A549 (cell line): ENCODE measurements at regions of chr3 and their contacts with region 1.

Region 1: GRCh38 chr3:58640700-58641372 is 25.7 kb downstream of the FAM3D start:
- DNase-seq: peak; percentile 53 to 61
- ATAC-seq: peak; percentile 93 to 98
- H3K4me3 ChIP-seq: no peak overlapping the region
- H3K27ac ChIP-seq: no peak overlapping the region
- H3K4me1 ChIP-seq: no peaks in the 10 kb centered on the region
- CTCF ChIP-seq: peak; percentile 72
- EP300 ChIP-seq: no peak
- POLR2A ChIP-seq: no peak
- RAD21 ChIP-seq: peak; percentile 87 to 92

Region 2: GRCh38 chr3:58474348-58474911 is 166.4 kb before region 1 on chr3:
- CTCF ChIA-PET with region 1: no interaction called
- POLR2A ChIA-PET with region 1: no interaction called
- DNase-seq: no peak
- ATAC-seq: no peak
- H3K4me3 ChIP-seq: no peak overlapping the region
- H3K27ac ChIP-seq: peak overlapping the region in 1 of 2 experiments; percentile 94; a peak in 4 of 6 replicates
- H3K4me1 ChIP-seq: peaks cover 51% of the 10 kb centered on the region
- CTCF ChIP-seq: no peak
- EP300 ChIP-seq: no peak
- POLR2A ChIP-seq: no peak
- RAD21 ChIP-seq: no peak

Region 3: GRCh38 chr3:58568572-58569286 is 72.1 kb before region 1 on chr3:
- CTCF ChIA-PET with region 1: interaction called, 10 read pairs
- POLR2A ChIA-PET with region 1: no interaction called
- DNase-seq: peak; percentile 33 to 56
- ATAC-seq: peak; percentile 40 to 80; a peak in 4 of 6 replicates
- H3K4me3 ChIP-seq: no peak overlapping the region
- H3K27ac ChIP-seq: 0 out of 6 replicates have a peak overlapping the region, but pooled peaks of 1 of the 2 experiments have one; percentile 18
- H3K4me1 ChIP-seq: peaks cover 16% of the 10 kb centered on the region
- CTCF ChIP-seq: peak; percentile 78
- EP300 ChIP-seq: no peak
- POLR2A ChIP-seq: no peak
- RAD21 ChIP-seq: peak; percentile 60 to 68

Region 4: DNA sequence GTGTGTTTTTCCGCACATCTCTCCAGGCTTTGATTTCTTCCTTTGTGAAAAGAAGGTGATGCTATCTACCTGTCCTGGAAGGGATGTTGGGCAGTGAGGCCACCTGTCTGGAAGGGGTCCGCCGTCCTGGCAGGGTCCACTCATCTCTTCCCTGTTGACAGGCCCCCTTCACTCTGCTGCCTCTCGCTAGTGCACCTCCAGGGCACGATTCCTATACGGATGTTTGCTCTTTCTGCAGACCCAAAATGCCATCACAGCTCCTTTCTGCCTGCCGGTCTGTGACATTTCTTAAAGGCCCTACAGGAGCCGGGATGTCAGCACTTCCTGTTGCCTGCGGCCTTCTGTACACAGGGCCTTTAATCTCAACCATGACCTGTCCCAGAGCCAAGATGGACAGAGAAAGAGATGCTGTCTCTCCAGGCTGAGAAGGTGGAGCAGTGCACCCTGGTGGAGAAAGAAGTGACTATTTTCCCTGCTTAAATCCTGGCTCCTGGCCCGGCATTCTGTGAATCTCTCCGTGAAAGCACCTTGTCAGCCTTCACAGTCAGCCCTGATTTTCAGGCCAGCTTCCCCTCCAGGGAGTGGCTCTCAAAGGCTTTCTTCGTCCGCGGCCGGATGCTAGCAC is 18.3 kb after region 1 on chr3:
- CTCF ChIA-PET with region 1: interaction called, 11 read pairs
- POLR2A ChIA-PET with region 1: no interaction called
- DNase-seq: peak; percentile 28 to 39
- ATAC-seq: peak; percentile 74 to 89; a peak in 5 of 6 replicates
- H3K4me3 ChIP-seq: no peak overlapping the region
- H3K27ac ChIP-seq: no peak overlapping the region
- H3K4me1 ChIP-seq: no peaks in the 10 kb centered on the region
- CTCF ChIP-seq: peak; percentile 33
- EP300 ChIP-seq: no peak
- POLR2A ChIP-seq: no peak
- RAD21 ChIP-seq: peak; percentile 16 to 34; a peak in 1 of 5 replicates

Region 5: DNA sequence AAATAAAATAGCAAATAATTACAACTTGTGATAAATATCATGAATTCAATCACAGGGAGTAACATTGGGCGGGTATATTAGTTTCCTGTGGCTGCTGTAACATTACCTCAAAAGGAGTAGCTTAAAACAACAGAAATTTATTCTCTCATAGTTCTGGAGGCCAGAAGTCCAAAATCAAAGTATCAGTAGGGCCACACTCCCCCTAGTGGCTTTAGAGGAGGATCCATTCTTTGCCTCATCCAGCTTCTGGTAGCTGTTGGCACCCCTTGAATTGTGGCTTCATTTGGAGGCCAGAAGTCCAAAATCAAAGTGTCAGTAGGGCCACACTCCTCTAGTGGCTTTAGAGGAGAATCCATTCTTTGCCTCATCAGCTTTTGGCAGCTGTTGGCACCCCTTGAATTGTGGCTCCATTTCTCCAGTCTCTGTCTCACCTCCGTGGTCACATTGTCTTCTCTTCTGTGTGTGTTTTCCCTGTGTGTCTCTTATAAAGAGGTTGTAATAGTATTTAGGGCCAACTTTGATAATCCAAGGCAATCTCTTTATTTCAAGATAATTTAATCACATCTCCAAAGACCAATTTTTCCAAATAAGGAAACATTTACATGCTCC is 412.1 kb after region 1 on chr3:
- CTCF ChIA-PET with region 1: interaction called, 10 read pairs
- POLR2A ChIA-PET with region 1: no interaction called
- DNase-seq: peak in 1 of 2 experiments; percentile 37
- ATAC-seq: peak in 1 of 2 experiments; percentile 37; a peak in 1 of 6 replicates
- H3K4me3 ChIP-seq: no peak overlapping the region
- H3K27ac ChIP-seq: no peak overlapping the region
- H3K4me1 ChIP-seq: peaks cover 11% of the 10 kb centered on the region; the same call in 2 of the 3 replicates
- CTCF ChIP-seq: peak; percentile 50
- EP300 ChIP-seq: no peak
- POLR2A ChIP-seq: no peak
- RAD21 ChIP-seq: peak; percentile 53 to 67; a peak in 4 of 5 replicates